ENCODE measurements at regions of chr2 and their contacts with region 1.

Region 1: DNA sequence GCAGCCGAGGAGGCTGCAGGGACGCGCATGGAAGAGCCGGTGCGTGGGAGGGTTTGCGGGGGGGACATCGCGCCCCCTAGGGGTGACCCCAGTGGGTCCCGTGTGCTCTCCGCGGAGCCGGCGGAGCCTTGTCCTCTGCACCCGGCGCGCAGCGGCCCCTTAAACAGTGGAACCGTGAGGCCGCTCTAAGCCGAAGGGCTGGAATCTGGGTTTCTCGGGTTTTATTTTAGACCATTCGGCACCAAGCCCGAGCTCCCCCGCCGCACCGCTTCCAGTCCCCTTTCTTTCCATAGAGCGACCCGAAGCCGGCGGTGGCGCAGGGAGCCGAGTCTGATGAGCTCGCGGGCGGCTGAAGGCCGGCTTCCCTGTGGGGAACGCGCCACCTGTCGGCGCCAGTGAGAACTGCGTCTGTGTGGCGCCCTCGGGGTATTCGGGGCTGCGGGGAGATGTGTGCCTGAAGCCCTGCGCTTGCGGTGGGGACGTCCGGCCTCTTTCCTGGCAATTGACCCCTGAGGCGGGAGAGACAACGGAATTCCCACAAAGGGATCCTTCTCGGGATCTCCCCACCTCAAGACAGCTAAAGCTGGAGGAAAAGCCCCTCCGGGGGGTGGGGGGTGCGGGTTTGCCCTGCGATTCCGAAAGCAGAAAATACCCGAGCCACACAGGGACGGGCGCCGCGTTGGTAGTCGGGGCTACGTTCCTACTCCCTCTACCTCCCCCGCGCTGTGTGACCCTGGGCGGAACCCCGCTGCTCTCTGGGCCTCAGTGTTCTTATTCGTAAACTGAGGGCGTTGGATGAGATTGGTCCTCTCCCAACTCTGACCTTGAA is 8.2 kb upstream of the EN1 start:
- DNase-seq: peak; percentile 91
- ATAC-seq: peak; percentile 86
- H3K4me3 Mint-ChIP-seq: peak overlapping the region; percentile 50
- H3K27ac Mint-ChIP-seq: no peak overlapping the region
- H3K4me1 Mint-ChIP-seq: peaks cover 26% of the 10 kb centered on the region
- H3K27me3 Mint-ChIP-seq: peaks cover 73% of the 10 kb centered on the region

Region 2: GRCh38 chr2:118046634-118047210 is 808.9 kb before region 1 on chr2:
- CTCF ChIA-PET with region 1: interaction called, 11 read pairs
- POLR2A ChIA-PET with region 1: no interaction called
- intact Hi-C with region 1: loop called (anchors 1 to 5 kb)
- DNase-seq: no peak
- ATAC-seq: no peak
- H3K4me3 Mint-ChIP-seq: no peak overlapping the region
- H3K27ac Mint-ChIP-seq: no peak overlapping the region
- H3K4me1 Mint-ChIP-seq: peaks cover 2% of the 10 kb centered on the region
- H3K27me3 Mint-ChIP-seq: peaks cover 46% of the 10 kb centered on the region

Region 3: GRCh38 chr2:118309946-118310680 is 545.6 kb before region 1 on chr2:
- CTCF ChIA-PET with region 1: no interaction called
- POLR2A ChIA-PET with region 1: no interaction called
- intact Hi-C with region 1: loop called in 1 of 2 experiments (anchors 2 kb)
- DNase-seq: peak; percentile 83
- ATAC-seq: peak; percentile 86
- H3K4me3 Mint-ChIP-seq: peak overlapping the region; percentile 76
- H3K27ac Mint-ChIP-seq: peak overlapping the region; percentile 93
- H3K4me1 Mint-ChIP-seq: peaks cover 7% of the 10 kb centered on the region
- H3K27me3 Mint-ChIP-seq: no peaks in the 10 kb centered on the region

Region 4: DNA sequence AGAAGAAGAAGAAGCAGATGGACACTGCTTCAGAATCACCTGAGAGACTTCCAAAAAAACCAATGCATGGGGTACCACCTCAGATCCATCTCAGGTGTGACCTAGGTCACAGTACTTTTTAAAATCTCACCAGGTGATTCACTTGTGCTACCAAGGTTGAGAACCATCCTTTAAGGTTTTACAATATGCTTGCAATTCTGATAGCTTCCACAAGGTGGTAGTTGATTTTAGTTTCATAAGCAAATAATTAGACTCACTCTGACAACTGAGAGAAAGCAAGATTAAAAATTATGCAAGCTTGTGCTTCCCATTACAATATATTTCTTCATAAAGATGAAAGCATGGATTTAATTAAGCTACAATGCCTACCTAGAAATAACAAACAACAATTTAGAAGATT is 363.3 kb before region 1 on chr2:
- CTCF ChIA-PET with region 1: no interaction called
- POLR2A ChIA-PET with region 1: no interaction called
- intact Hi-C with region 1: loop called (anchors 1 to 5 kb)
- DNase-seq: no peak
- ATAC-seq: no peak
- H3K4me3 Mint-ChIP-seq: no peak overlapping the region
- H3K27ac Mint-ChIP-seq: no peak overlapping the region
- H3K4me1 Mint-ChIP-seq: no peaks in the 10 kb centered on the region
- H3K27me3 Mint-ChIP-seq: peaks cover 12% of the 10 kb centered on the region

Region 5: DNA sequence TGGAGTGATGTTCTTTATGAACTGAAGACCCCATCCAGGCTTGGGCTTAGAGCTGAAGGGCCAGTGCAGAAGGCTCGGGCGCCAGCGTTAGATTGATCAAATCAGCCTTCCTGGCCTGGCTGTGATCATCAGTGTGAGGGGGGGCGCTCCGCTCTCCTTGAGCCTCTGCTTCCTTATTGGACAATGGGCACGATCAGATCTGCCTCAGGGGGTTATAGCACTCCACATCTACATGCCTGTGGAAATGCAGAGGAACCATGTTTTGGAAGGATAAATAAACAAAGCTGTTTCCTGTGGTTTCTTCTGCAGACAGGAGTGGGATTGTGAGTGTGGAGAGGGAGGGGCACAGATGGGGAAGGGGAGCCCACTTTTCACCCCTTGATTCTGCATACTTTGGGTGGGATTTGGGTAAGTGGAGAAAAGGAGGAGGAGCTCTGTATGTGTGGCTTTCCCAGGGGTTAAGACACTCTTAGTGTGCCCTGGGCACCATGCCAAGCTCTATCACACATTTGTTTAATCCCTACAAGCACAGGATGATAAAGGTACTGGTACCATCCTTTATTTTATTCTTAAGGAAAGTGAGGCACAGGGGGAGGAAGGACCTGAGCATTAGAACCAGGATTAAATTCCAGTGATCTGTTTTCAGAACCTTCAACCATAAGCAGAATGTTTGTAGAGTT is 158.7 kb before region 1 on chr2:
- CTCF ChIA-PET with region 1: no interaction called
- POLR2A ChIA-PET with region 1: no interaction called
- intact Hi-C with region 1: no loop called
- DNase-seq: no peak
- ATAC-seq: no peak
- H3K4me3 Mint-ChIP-seq: no peak overlapping the region
- H3K27ac Mint-ChIP-seq: no peak overlapping the region
- H3K4me1 Mint-ChIP-seq: no peaks in the 10 kb centered on the region
- H3K27me3 Mint-ChIP-seq: peaks cover 4% of the 10 kb centered on the region

Region 6: DNA sequence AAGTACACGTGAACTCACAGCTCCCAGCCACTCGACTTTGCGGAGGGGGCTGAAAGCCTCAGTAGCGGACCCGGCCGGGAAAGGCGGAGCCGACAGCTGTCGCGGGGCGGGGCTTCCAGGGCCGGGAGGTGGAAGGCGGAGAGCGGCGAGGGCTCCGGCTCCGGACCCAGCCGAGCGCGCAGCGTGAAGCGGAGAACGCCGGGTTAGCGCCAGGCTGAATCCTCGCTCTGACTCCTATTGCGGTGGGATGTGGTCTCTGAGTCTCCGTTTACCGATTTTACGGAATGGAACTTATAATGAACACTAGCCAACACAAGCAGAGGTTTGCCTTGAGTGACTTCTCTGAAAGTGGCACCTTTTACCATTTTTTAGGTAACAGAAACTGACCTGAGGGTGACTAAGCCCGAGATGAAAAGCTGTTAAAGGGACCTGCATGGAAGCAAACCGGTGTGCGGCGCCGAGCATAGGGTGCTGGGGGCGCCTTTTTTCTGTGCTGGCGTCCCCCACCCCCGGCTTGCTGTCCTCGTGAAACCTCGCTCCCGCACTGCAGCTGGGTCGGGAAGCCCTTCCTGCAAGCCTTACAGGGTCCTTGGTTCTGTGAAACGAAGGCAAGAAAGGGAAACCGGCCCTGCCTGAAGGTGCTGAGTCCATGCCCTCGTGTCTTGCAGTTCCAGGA is 81.1 kb before region 1 on chr2:
- CTCF ChIA-PET with region 1: no interaction called
- POLR2A ChIA-PET with region 1: no interaction called
- intact Hi-C with region 1: loop called in 1 of 2 experiments (anchors 2 kb)
- DNase-seq: peak; percentile 64
- ATAC-seq: peak; percentile 93
- H3K4me3 Mint-ChIP-seq: peak overlapping the region; percentile 21
- H3K27ac Mint-ChIP-seq: no peak overlapping the region
- H3K4me1 Mint-ChIP-seq: peaks cover 7% of the 10 kb centered on the region
- H3K27me3 Mint-ChIP-seq: peaks cover 37% of the 10 kb centered on the region

Region 7: DNA sequence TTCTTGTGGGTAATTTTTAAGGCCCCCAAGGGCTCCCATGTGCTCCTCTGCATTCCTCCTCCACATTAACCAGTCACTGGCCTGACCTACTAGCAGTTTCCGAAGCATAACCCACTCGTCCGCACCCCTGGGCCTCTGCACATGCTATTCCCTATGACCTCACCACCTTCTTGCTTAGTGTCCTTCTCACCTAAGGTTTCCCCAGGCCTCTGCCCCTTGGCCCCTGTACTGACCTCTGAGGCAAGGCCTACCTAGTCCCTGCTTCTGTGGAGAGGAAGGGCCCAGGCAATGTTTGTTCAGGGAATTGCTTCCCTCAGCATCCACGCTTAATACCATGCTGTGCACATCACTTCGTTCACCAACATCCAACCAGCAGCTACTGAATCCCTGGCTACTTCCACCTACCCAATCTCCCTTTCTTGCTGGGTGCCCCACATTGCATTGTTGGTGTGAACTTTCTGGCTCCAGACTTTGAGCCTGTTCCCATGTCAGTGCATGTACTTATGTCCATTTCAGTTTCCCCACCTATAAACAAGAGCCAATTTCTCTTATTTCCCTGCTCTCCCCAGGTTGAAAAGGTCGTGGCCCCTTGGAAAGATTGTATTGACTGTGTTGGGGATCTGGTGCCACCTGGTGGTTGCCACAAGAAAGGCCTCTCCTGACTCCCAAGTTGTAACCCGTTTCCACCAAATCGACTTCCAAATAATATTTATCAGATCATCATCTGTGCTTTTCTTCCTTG is 804.1 kb after region 1 on chr2:
- CTCF ChIA-PET with region 1: no interaction called
- POLR2A ChIA-PET with region 1: no interaction called
- intact Hi-C with region 1: no loop called
- DNase-seq: peak; percentile 71
- ATAC-seq: no peak
- H3K4me3 Mint-ChIP-seq: no peak overlapping the region
- H3K27ac Mint-ChIP-seq: no peak overlapping the region
- H3K4me1 Mint-ChIP-seq: no peaks in the 10 kb centered on the region
- H3K27me3 Mint-ChIP-seq: peaks cover 5% of the 10 kb centered on the region